ENCODE measurements at regions of chr6 and their contacts with region 1.

Region 1: GRCh38 chr6:33744001-33744848 is 2.5 kb downstream of the IP6K3 start:
- DNase-seq: peak; percentile 87
- ATAC-seq: peak; percentile 87
- H3K4me3 Mint-ChIP-seq: no peak overlapping the region
- H3K27ac Mint-ChIP-seq: no peak overlapping the region
- H3K4me1 Mint-ChIP-seq: peaks cover 2% of the 10 kb centered on the region
- H3K27me3 Mint-ChIP-seq: peaks cover 5% of the 10 kb centered on the region
- CTCF ChIP-seq: peak; percentile 84

Region 2: DNA sequence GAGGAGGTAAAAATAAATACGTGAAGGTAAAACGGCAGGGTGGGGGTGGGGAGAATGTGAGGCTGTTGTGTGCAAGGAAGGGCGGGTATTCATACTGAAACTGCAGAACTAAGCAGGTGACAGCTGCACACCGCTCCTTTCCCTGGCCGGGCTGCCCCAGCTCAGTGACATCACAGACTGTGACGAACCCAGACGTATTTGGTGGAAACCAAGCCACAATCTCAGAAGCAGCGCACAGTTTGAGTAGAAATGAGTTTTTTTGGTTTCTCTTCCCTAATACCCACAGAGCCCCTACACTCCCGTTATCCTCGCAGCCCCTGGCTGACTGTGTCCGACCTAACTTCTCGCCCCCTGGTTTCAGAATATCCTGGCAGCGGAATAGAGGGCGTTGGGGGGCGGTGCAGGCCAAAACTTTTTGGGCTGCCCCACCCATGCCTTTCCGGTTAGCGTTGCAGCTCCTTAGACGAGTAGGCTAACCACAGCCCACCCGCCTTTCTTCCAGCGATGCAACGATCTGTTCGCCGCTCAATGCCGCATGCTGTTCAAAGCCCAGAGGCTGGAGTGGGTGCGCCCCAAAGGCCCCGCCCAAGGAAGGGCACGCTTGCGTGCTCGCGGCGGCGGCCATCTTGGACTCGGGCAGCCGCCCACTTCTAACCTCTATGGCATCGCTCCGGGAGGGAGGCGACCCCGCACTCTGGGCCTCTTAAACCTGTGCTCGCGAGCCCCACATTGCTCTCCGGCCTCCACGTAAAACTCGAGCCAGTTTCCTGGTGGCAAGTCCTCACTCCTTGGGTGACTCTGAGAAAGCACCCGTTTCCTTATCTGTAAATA is 173.2 kb before region 1 on chr6:
- CTCF ChIA-PET with region 1: no interaction called
- POLR2A ChIA-PET with region 1: no interaction called
- intact Hi-C with region 1: no loop called
- DNase-seq: peak; percentile 98
- ATAC-seq: peak; percentile 89
- H3K4me3 Mint-ChIP-seq: peak overlapping the region; percentile 82
- H3K27ac Mint-ChIP-seq: peak overlapping the region; percentile 100
- H3K4me1 Mint-ChIP-seq: peaks cover 37% of the 10 kb centered on the region
- H3K27me3 Mint-ChIP-seq: no peaks in the 10 kb centered on the region
- CTCF ChIP-seq: no peak

Region 3: GRCh38 chr6:33727932-33728331 is 16.3 kb before region 1 on chr6:
- CTCF ChIA-PET with region 1: interaction called, 17 read pairs
- POLR2A ChIA-PET with region 1: no interaction called
- intact Hi-C with region 1: no loop called
- DNase-seq: no peak
- ATAC-seq: no peak
- H3K4me3 Mint-ChIP-seq: no peak overlapping the region
- H3K27ac Mint-ChIP-seq: no peak overlapping the region
- H3K4me1 Mint-ChIP-seq: peaks cover 13% of the 10 kb centered on the region
- H3K27me3 Mint-ChIP-seq: no peaks in the 10 kb centered on the region
- CTCF ChIP-seq: no peak

Region 4: GRCh38 chr6:33875141-33875581 is 130.9 kb after region 1 on chr6:
- CTCF ChIA-PET with region 1: no interaction called
- POLR2A ChIA-PET with region 1: no interaction called
- intact Hi-C with region 1: no loop called
- DNase-seq: no peak
- ATAC-seq: no peak
- H3K4me3 Mint-ChIP-seq: no peak overlapping the region
- H3K27ac Mint-ChIP-seq: no peak overlapping the region
- H3K4me1 Mint-ChIP-seq: peaks cover 9% of the 10 kb centered on the region
- H3K27me3 Mint-ChIP-seq: no peaks in the 10 kb centered on the region
- CTCF ChIP-seq: no peak